Panc1 (cell line): ENCODE measurements at regions of chr3 and their contacts with region 1.

Region 1: GRCh38 chr3:125054449-125055329 is 1.1 kb downstream of the HEG1 start:
- DNase-seq: no peak
- ATAC-seq: peak; percentile 49
- H3K4me3 ChIP-seq: peak overlapping the region; percentile 92 to 94
- H3K27ac ChIP-seq: peak overlapping the region; percentile 96
- H3K4me1 ChIP-seq: peaks cover 68% of the 10 kb centered on the region
- H3K27me3 ChIP-seq: no peaks in the 10 kb centered on the region
- CTCF ChIP-seq: no peak

Region 2: DNA sequence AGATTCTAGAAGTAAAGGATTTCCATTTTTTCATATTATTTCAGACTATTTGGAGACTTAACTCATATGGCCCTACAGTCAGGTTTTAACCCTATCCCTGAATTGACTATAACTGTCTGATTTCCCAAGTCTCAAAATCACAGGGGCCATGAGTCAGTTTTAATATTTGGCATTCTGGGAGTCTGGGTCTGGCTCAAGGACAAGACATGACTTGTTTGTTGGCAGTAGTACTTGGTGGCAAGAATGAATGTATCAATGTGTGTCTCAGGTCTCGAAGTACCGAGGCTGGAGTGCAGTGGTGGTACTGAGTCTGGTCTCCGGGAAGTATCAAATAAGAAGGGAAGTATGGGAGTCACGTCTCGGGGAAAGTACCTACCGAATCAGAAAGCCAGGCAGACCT is 313.7 kb before region 1 on chr3:
- CTCF ChIA-PET with region 1: no interaction called
- POLR2A ChIA-PET with region 1: interaction called, 11 read pairs
- in situ Hi-C with region 1: no loop called
- intact Hi-C with region 1: no loop called
- DNase-seq: no peak
- ATAC-seq: no peak
- H3K4me3 ChIP-seq: no peak overlapping the region
- H3K27ac ChIP-seq: no peak overlapping the region
- H3K4me1 ChIP-seq: no peaks in the 10 kb centered on the region
- H3K27me3 ChIP-seq: no peaks in the 10 kb centered on the region
- CTCF ChIP-seq: no peak

Region 3: GRCh38 chr3:125150525-125151441 is 96.1 kb after region 1 on chr3:
- CTCF ChIA-PET with region 1: interaction called, 6 read pairs
- POLR2A ChIA-PET with region 1: no interaction called
- in situ Hi-C with region 1: no loop called
- intact Hi-C with region 1: loop called (anchors 5 kb)
- DNase-seq: peak; percentile 77
- ATAC-seq: peak; percentile 82
- H3K4me3 ChIP-seq: no peak overlapping the region
- H3K27ac ChIP-seq: peak overlapping the region; percentile 67; the same call in 1 of the 2 replicates
- H3K4me1 ChIP-seq: peaks cover 6% of the 10 kb centered on the region
- H3K27me3 ChIP-seq: no peaks in the 10 kb centered on the region
- CTCF ChIP-seq: peak; percentile 92